Dendritic cell treated with granulocyte-macrophage colony-stimulating factor and Interleukin-4, amounts not matched to agents 40 ng/mL and 50 ng/mL, for 4 days (primary cell): ENCODE measurements at regions of chr2 and their contacts with region 1.

Region 1: GRCh38 chr2:73926493-73927338 is at the start of gene DGUOK:
- H3K4me3 Mint-ChIP-seq: peak within 1 kb of the TSS; percentile 82
- H3K27ac Mint-ChIP-seq: peak within 1 kb of the TSS; percentile 95
- H3K4me1 Mint-ChIP-seq: peaks cover 54% of the 10 kb centered on the region
- H3K27me3 Mint-ChIP-seq: no peaks in the 10 kb centered on the region

Region 2: GRCh38 chr2:73877071-73877802 is 49.5 kb before region 1 on chr2:
- intact Hi-C with region 1: loop called (anchors 5 kb)
- H3K4me3 Mint-ChIP-seq: peak overlapping the region; percentile 51
- H3K27ac Mint-ChIP-seq: peak overlapping the region; percentile 72
- H3K4me1 Mint-ChIP-seq: peaks cover 12% of the 10 kb centered on the region
- H3K27me3 Mint-ChIP-seq: no peaks in the 10 kb centered on the region

Region 3: DNA sequence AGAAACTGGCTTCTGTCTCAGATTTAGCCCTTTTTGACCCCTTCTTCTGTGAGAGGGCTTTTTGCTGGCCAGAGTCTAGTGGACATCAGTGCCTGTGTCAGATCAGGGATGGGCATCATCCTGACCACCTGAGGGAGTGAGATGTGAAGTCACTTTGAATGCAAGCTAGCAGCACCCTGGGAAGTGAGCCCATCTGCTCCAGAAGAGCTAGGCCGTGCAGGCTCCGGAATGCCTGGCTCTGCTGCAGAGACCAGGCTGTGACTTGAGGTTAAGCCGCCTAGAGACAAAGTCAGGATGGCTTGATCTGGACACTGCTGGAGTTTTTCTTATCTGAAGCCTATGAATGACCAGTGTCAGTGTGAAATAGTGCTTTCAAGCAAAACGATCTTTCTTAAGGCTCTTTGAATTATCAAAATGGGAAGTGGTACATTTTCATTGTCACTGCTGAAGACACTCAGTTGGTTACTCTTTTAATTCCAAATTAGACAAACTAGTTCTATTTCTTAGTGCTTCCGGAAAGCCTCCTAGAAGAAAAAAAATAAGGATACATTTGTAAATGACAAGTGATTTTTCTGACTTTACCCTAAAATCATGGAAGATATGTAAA is 20.8 kb after region 1 on chr2:
- intact Hi-C with region 1: loop called (anchors 2 kb)
- H3K4me3 Mint-ChIP-seq: peak overlapping the region; percentile 9
- H3K27ac Mint-ChIP-seq: peak overlapping the region; percentile 86
- H3K4me1 Mint-ChIP-seq: peaks cover 75% of the 10 kb centered on the region
- H3K27me3 Mint-ChIP-seq: no peaks in the 10 kb centered on the region

Region 4: DNA sequence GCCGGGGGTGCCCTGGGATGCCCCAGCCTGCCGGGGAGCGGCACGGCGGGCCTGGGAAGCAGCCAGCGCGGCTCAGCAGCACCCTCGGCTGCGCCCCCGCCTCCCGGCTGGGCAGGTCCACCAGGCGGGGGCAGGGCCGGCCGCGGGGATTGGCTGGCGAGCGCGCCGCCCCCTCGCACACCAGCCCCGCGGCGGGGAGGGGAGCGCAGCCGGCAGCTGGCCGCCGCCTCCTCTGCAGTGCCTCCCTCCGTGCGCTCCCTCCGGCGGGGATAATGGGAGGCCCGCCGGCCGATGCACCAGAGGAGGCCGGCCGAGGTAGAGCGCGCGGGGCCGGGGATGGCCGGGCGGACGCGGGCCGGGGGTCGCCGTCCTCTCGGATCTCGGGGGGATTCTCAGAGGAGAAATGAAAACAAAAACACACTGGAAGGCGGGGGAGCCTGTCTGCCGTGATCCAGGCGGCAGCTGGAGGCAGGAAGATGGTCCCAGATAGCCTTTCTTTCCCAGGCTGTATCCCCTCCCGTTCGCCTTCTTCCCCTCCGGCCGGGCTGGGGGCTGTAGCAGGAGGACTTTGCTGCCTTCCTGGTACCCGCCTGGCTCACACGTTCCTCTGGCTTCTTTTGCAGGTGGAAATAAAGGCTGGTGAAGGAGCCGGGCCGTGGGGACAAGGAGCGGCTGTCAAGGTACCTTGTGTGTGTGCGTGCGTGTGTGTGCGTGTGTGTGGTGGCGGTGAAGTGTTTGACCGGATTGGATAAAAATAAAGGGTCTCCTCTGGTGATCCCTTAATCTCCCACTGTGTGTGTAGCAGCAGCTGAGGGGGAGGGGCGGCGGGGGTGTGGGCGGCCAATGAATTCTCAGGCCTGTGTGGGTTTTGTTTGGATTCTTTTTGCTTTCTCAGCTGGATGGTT is 76.0 kb after region 1 on chr2:
- intact Hi-C with region 1: no loop called
- H3K4me3 Mint-ChIP-seq: peak overlapping the region; percentile 67
- H3K27ac Mint-ChIP-seq: no peak overlapping the region
- H3K4me1 Mint-ChIP-seq: peaks cover 96% of the 10 kb centered on the region
- H3K27me3 Mint-ChIP-seq: no peaks in the 10 kb centered on the region